GM12878 (cell line): ENCODE measurements at regions of chr13 and their contacts with region 1.

Region 1: DNA sequence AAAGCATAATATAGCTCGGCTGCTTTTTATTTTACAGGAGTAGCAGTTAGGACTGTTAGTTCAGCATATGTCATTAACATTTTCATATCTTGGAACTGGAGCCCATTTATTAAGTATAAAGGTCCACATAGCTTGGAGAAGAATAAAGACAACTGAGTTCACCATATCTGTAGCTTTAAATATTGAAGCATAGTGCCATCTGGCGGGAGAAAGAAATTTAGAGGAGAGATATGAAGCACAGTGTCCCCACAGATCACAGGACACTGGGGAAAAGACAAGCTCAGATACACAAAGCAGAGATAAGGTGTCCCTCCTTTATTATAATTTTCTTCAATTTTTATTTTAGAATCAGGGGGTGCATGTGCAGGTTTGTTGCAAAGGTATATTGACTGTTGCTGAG is 104.7 kb upstream of the FREM2 start:
- DNase-seq: no peak
- ATAC-seq: peak; percentile 85
- H3K4me3 ChIP-seq: no peak overlapping the region
- H3K27ac ChIP-seq: no peak overlapping the region
- H3K4me1 ChIP-seq: no peaks in the 10 kb centered on the region
- H3K27me3 ChIP-seq: no peaks in the 10 kb centered on the region
- CTCF ChIP-seq: peak; percentile 17 to 53 (median 29); a peak in 4 of 6 replicates
- EP300 ChIP-seq: no peak
- POLR2A ChIP-seq: no peak
- RAD21 ChIP-seq: peak; percentile 66

Region 2: DNA sequence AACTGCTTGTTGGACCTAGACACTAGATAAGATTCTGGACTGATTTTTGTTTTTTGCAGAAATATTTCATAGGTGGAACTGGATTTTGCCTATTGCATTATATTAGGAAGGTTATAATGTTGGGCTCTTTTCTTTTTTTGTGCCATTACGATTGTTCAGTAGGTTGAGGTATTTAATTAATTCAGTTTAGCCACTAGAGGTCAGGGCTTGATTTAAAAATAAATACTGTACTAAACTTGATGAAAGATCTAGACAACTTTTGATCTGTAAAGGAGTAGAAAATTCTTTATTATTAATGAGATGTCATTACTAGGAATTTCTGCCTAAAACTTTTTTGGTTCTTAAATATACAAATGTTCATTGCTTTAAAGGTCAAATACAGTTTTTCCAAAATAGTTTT is 1507.4 kb before region 1 on chr13:
- CTCF ChIA-PET with region 1: interaction called, 3 read pairs
- POLR2A ChIA-PET with region 1: no interaction called
- RAD21 ChIA-PET with region 1: no interaction called
- SMC1A ChIA-PET with region 1: no interaction called
- in situ Hi-C with region 1: no loop called
- intact Hi-C with region 1: loop called (anchors 10 kb)
- DNase-seq: no peak
- ATAC-seq: peak; percentile 60
- H3K4me3 ChIP-seq: no peak overlapping the region
- H3K27ac ChIP-seq: no peak overlapping the region
- H3K4me1 ChIP-seq: no peaks in the 10 kb centered on the region
- H3K27me3 ChIP-seq: no peaks in the 10 kb centered on the region; a peak in 1 of 4 replicates
- CTCF ChIP-seq: peak in 1 of 3 experiments; percentile 48; a peak in 1 of 6 replicates
- EP300 ChIP-seq: no peak
- POLR2A ChIP-seq: no peak
- RAD21 ChIP-seq: peak; percentile 33

Region 3: DNA sequence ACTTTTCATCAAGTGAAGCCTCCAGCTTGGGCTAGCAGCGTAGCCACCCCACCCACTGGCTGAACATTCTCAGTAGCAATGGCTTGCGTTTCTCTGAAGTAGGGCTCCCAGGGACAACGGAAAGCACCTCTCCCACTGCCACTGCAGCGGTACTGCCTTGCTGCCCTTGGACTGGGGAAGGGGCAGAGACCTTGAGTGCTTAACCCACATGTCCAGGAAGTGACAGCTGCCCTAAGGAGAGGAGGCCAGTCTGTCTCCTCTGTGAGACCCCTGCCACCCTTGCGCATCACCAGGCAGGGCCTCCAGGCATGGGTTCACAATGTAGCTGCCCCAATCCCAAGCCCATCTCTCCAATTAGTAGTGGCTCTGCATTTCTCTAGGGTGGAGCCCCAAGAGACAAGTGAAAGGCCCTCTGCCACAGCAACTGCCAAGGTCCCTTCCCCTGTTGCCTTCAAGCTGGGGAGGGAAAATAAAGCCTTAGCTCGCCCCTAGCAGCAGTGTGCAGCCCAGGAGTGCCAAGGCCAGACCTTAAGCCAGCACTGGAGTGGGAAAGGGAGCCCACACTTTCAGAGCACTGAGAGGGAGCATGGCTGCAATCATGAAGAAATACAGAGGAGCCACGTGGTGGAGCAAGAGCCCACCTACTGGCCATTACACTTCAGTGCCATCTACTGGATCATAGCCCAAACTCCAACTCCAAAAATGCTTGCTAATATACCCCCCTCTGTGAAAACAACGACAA is 536.7 kb before region 1 on chr13:
- CTCF ChIA-PET with region 1: no interaction called
- POLR2A ChIA-PET with region 1: no interaction called
- RAD21 ChIA-PET with region 1: no interaction called
- SMC1A ChIA-PET with region 1: no interaction called
- in situ Hi-C with region 1: no loop called
- intact Hi-C with region 1: loop called (anchors 2 kb)
- DNase-seq: no peak
- ATAC-seq: peak; percentile 75
- H3K4me3 ChIP-seq: no peak overlapping the region
- H3K27ac ChIP-seq: no peak overlapping the region
- H3K4me1 ChIP-seq: no peaks in the 10 kb centered on the region
- H3K27me3 ChIP-seq: no peaks in the 10 kb centered on the region
- CTCF ChIP-seq: peak; percentile 19 to 43 (median 41); a peak in 4 of 6 replicates
- EP300 ChIP-seq: no peak
- POLR2A ChIP-seq: no peak
- RAD21 ChIP-seq: peak; percentile 43; the same call in 1 of the 2 replicates

Region 4: DNA sequence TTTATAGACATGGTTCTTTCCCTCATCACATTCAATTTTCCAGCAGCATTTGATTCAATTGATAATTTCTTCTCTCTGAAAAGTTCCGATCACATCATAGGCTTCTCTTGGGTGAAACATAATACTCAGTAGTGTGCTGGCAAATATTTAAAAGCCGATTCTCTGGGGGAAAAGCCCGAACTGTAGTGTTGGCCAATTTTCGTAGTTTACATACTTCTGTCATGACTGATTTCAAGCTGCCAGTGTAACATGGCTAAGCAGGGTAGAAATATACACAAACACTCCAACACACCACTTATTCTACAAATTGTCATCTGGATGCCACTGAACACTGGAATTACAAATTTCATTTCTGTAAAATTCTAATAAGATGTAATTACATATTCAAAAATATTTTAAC is 48.6 kb after region 1 on chr13:
- CTCF ChIA-PET with region 1: no interaction called
- POLR2A ChIA-PET with region 1: no interaction called
- RAD21 ChIA-PET with region 1: no interaction called
- SMC1A ChIA-PET with region 1: no interaction called
- in situ Hi-C with region 1: no loop called
- intact Hi-C with region 1: no loop called
- DNase-seq: no peak
- ATAC-seq: no peak
- H3K4me3 ChIP-seq: no peak overlapping the region
- H3K27ac ChIP-seq: no peak overlapping the region
- H3K4me1 ChIP-seq: no peaks in the 10 kb centered on the region
- H3K27me3 ChIP-seq: no peaks in the 10 kb centered on the region
- CTCF ChIP-seq: no peak
- EP300 ChIP-seq: no peak
- POLR2A ChIP-seq: no peak
- RAD21 ChIP-seq: no peak

Region 5: GRCh38 chr13:40251343-40252032 is 1669.4 kb after region 1 on chr13:
- CTCF ChIA-PET with region 1: no interaction called
- POLR2A ChIA-PET with region 1: no interaction called
- RAD21 ChIA-PET with region 1: no interaction called
- SMC1A ChIA-PET with region 1: no interaction called
- in situ Hi-C with region 1: no loop called
- intact Hi-C with region 1: no loop called
- DNase-seq: no peak
- ATAC-seq: peak; percentile 69
- H3K4me3 ChIP-seq: no peak overlapping the region
- H3K27ac ChIP-seq: no peak overlapping the region
- H3K4me1 ChIP-seq: no peaks in the 10 kb centered on the region; the same call in 1 of the 2 replicates
- H3K27me3 ChIP-seq: no peaks in the 10 kb centered on the region; a peak in 1 of 4 replicates
- CTCF ChIP-seq: no peak
- EP300 ChIP-seq: no peak
- POLR2A ChIP-seq: no peak
- RAD21 ChIP-seq: peak; percentile 32; the same call in 1 of the 2 replicates